Prostate gland (tissue), 2 donors: ENCODE measurements at regions of chr20 and their contacts with region 1.

Region 1: GRCh38 chr20:58209652-58210397 is 18.6 kb downstream of the ANKRD60 start:
- DNase-seq: peak; percentile 72
- H3K4me3 ChIP-seq: no peak overlapping the region
- H3K27ac ChIP-seq: no peak overlapping the region
- H3K4me1 ChIP-seq: no peaks in the 10 kb centered on the region
- H3K27me3 ChIP-seq: no peaks in the 10 kb centered on the region
- CTCF ChIP-seq: peak; percentile 100
- POLR2A ChIP-seq: no peak

Region 2: GRCh38 chr20:57514273-57514751 is 695.5 kb before region 1 on chr20:
- intact Hi-C with region 1: loop called (anchors 2 kb)
- DNase-seq: peak; percentile 82
- H3K4me3 ChIP-seq: no peak overlapping the region
- H3K27ac ChIP-seq: no peak overlapping the region
- H3K4me1 ChIP-seq: no peaks in the 10 kb centered on the region
- H3K27me3 ChIP-seq: no peaks in the 10 kb centered on the region
- CTCF ChIP-seq: peak; percentile 58 to 94 (median 84)
- POLR2A ChIP-seq: no peak

Region 3: GRCh38 chr20:57968081-57968480 is 241.7 kb before region 1 on chr20:
- intact Hi-C with region 1: no loop called
- DNase-seq: no peak
- H3K4me3 ChIP-seq: no peak overlapping the region
- H3K27ac ChIP-seq: no peak overlapping the region
- H3K4me1 ChIP-seq: no peaks in the 10 kb centered on the region
- H3K27me3 ChIP-seq: no peaks in the 10 kb centered on the region
- CTCF ChIP-seq: no peak
- POLR2A ChIP-seq: no peak

Region 4: DNA sequence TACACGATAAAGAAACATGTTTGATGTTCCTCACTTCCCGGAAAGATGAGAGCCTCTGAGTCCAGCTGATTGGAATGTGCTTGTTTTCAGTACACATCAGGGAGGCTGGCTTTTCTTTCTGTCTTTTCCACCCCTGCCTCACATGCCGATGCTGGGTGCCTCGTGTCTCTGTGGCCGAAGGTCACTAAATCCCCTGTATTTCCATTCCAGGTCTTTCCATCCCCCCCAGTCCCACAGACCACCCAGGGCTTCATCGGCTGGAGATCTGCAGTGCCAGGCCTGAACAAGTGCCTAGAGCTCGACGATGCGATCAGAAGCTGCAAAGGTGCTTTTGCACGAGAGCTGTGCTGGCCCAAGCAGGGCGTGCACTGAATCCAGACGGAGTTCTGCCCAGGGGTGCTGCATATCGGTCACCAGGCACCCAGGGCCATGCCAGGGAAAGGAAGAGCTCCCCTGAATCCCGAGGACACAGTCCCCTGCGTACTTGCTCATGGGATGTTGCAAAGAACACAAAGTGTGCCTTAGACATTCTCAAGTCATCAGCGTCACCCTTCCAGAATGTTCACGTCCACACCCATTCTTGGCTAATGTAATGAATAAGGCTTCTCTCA is 49.3 kb before region 1 on chr20:
- intact Hi-C with region 1: no loop called
- DNase-seq: no peak
- H3K4me3 ChIP-seq: no peak overlapping the region
- H3K27ac ChIP-seq: peak overlapping the region in 1 of 2 donors; percentile 28
- H3K4me1 ChIP-seq: no peaks in the 10 kb centered on the region
- H3K27me3 ChIP-seq: no peaks in the 10 kb centered on the region
- CTCF ChIP-seq: no peak
- POLR2A ChIP-seq: no peak

Region 5: DNA sequence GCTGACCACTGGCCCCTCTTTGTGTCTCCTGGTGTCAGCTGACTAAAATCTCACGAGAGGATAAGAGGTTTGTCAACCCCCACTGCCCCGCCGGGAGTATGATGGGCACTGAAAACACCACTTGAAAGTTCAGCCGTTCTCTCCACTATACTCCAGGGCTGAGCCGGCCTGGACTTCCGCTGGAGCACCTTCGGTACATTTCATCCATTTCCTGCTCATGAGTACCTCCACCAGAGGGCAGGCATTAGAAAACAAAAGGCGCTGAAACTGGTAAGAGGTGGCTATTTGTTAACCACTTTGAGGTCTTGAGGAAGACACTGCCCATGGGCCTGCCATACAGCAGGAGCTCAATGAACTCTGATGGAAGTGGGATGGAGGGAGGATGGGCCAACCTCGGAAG is 36.5 kb after region 1 on chr20:
- intact Hi-C with region 1: no loop called
- DNase-seq: no peak
- H3K4me3 ChIP-seq: no peak overlapping the region
- H3K27ac ChIP-seq: no peak overlapping the region
- H3K4me1 ChIP-seq: no peaks in the 10 kb centered on the region
- H3K27me3 ChIP-seq: no peaks in the 10 kb centered on the region
- CTCF ChIP-seq: peak in 1 of 4 experiments; percentile 6
- POLR2A ChIP-seq: no peak